K562 (cell line): ENCODE measurements at regions of chr20 and their contacts with region 1.

Region 1: GRCh38 chr20:3276680-3277015 is 37.7 kb upstream of the SLC4A11 start:
- DNase-seq: peak in 3 of 4 experiments; percentile 17 to 58 (median 56)
- ATAC-seq: peak; percentile 95
- H3K4me3 ChIP-seq: no peak overlapping the region
- H3K27ac ChIP-seq: no peak overlapping the region
- H3K4me1 ChIP-seq: no peaks in the 10 kb centered on the region
- H3K27me3 ChIP-seq: no peaks in the 10 kb centered on the region
- CTCF ChIP-seq: peak; percentile 61 to 71 (median 70)
- EP300 ChIP-seq: no peak
- POLR2A ChIP-seq: no peak
- RAD21 ChIP-seq: peak; percentile 30 to 59; a peak in 3 of 4 replicates

Region 2: GRCh38 chr20:3115190-3116107 is 161.2 kb before region 1 on chr20:
- CTCF ChIA-PET with region 1: no interaction called
- POLR2A ChIA-PET with region 1: no interaction called
- in situ Hi-C with region 1: no loop called
- intact Hi-C with region 1: loop called (anchors 2 kb)
- DNase-seq: peak; percentile 51 to 78 (median 72)
- ATAC-seq: peak; percentile 65
- H3K4me3 ChIP-seq: no peak overlapping the region
- H3K27ac ChIP-seq: no peak overlapping the region
- H3K4me1 ChIP-seq: peaks cover 0 to 8% of the 10 kb centered on the region in 2 experiments; a peak in 4 of 5 replicates
- H3K27me3 ChIP-seq: no peaks in the 10 kb centered on the region
- CTCF ChIP-seq: peak; percentile 70 to 79 (median 76)
- EP300 ChIP-seq: no peak
- POLR2A ChIP-seq: no peak
- RAD21 ChIP-seq: peak in 1 of 2 experiments; percentile 29; a peak in 2 of 4 replicates

Region 3: GRCh38 chr20:3193806-3194616 is 82.6 kb before region 1 on chr20:
- CTCF ChIA-PET with region 1: no interaction called
- POLR2A ChIA-PET with region 1: no interaction called
- in situ Hi-C with region 1: no loop called
- intact Hi-C with region 1: no loop called
- DNase-seq: no peak
- ATAC-seq: no peak
- H3K4me3 ChIP-seq: no peak overlapping the region
- H3K27ac ChIP-seq: no peak overlapping the region
- H3K4me1 ChIP-seq: peaks cover 0 to 5% of the 10 kb centered on the region in 2 experiments; a peak in 1 of 5 replicates
- H3K27me3 ChIP-seq: no peaks in the 10 kb centered on the region
- CTCF ChIP-seq: no peak
- EP300 ChIP-seq: no peak
- POLR2A ChIP-seq: no peak
- RAD21 ChIP-seq: no peak

Region 4: DNA sequence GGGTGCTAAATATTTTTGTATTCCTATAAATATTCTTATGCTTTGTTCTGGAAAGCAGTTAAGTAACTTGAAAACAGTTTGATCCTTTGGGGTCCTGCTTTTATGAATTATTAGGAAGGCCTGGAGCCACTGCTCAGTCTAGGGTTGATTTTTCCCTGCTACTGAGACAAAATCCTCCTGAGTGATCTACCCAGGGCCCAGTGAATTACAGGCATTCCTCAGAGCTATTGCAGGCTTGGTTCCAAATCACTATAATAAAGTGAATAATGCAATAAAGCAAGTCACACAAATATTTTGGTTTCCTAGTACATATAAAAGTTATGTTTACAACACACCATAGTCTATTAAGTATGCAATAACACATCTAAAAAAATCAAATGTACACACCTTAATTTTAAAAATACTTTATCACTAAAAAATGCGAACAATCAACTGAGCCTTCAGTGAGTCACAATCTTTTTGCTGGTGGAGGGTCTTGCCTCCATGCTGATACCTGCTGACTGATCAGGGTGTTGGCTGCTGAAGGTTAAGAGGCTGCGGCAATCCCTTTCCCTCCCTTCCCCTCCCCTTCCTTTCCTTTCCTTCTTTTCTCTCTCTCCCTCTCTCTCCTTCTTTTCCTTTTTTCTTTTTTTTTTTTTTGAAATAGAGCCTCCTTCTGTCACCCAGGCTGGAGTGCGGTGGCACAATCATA is 87.8 kb after region 1 on chr20:
- CTCF ChIA-PET with region 1: no interaction called
- POLR2A ChIA-PET with region 1: no interaction called
- in situ Hi-C with region 1: no loop called
- intact Hi-C with region 1: no loop called
- DNase-seq: no peak
- ATAC-seq: no peak
- H3K4me3 ChIP-seq: no peak overlapping the region
- H3K27ac ChIP-seq: no peak overlapping the region
- H3K4me1 ChIP-seq: peaks cover 0 to 2% of the 10 kb centered on the region in 2 experiments; a peak in 2 of 5 replicates
- H3K27me3 ChIP-seq: no peaks in the 10 kb centered on the region
- CTCF ChIP-seq: no peak
- EP300 ChIP-seq: no peak
- POLR2A ChIP-seq: no peak
- RAD21 ChIP-seq: no peak

Region 5: GRCh38 chr20:3378138-3378537 is 101.5 kb after region 1 on chr20:
- CTCF ChIA-PET with region 1: no interaction called
- POLR2A ChIA-PET with region 1: no interaction called
- in situ Hi-C with region 1: no loop called
- intact Hi-C with region 1: no loop called
- DNase-seq: no peak
- ATAC-seq: no peak
- H3K4me3 ChIP-seq: no peak overlapping the region
- H3K27ac ChIP-seq: no peak overlapping the region
- H3K4me1 ChIP-seq: no peaks in the 10 kb centered on the region
- H3K27me3 ChIP-seq: no peaks in the 10 kb centered on the region
- CTCF ChIP-seq: no peak
- EP300 ChIP-seq: no peak
- POLR2A ChIP-seq: no peak
- RAD21 ChIP-seq: no peak